Motor neuron (in vitro differentiated cells): ENCODE measurements at regions of chr3 and their contacts with region 1.

Region 1: GRCh38 chr3:195226900-195227447 is 44.0 kb downstream of the XXYLT1 start:
- ATAC-seq: peak in 7 of 8 experiments; percentile 15 to 90 (median 50)
- H3K4me3 ChIP-seq: no peak overlapping the region
- H3K27ac ChIP-seq: no peak overlapping the region
- H3K4me1 ChIP-seq: no peaks in the 10 kb centered on the region

Region 2: GRCh38 chr3:194749631-194750490 is 477.1 kb before region 1 on chr3:
- in situ Hi-C with region 1: no loop called
- ATAC-seq: peak in 7 of 8 experiments; percentile 36 to 88 (median 49)
- H3K4me3 ChIP-seq: no peak overlapping the region
- H3K27ac ChIP-seq: no peak overlapping the region
- H3K4me1 ChIP-seq: peaks cover 0 to 5% of the 10 kb centered on the region in 2 donors

Region 3: GRCh38 chr3:194985031-194985578 is 241.9 kb before region 1 on chr3:
- in situ Hi-C with region 1: loop called in 2 of 9 experiments (anchors 25 kb)
- ATAC-seq: peak in 2 of 8 experiments; percentile 99
- H3K4me3 ChIP-seq: no peak overlapping the region
- H3K27ac ChIP-seq: no peak overlapping the region
- H3K4me1 ChIP-seq: no peaks in the 10 kb centered on the region